GM12878 (cell line): ENCODE measurements at regions of chr5 and their contacts with region 1.

Region 1: DNA sequence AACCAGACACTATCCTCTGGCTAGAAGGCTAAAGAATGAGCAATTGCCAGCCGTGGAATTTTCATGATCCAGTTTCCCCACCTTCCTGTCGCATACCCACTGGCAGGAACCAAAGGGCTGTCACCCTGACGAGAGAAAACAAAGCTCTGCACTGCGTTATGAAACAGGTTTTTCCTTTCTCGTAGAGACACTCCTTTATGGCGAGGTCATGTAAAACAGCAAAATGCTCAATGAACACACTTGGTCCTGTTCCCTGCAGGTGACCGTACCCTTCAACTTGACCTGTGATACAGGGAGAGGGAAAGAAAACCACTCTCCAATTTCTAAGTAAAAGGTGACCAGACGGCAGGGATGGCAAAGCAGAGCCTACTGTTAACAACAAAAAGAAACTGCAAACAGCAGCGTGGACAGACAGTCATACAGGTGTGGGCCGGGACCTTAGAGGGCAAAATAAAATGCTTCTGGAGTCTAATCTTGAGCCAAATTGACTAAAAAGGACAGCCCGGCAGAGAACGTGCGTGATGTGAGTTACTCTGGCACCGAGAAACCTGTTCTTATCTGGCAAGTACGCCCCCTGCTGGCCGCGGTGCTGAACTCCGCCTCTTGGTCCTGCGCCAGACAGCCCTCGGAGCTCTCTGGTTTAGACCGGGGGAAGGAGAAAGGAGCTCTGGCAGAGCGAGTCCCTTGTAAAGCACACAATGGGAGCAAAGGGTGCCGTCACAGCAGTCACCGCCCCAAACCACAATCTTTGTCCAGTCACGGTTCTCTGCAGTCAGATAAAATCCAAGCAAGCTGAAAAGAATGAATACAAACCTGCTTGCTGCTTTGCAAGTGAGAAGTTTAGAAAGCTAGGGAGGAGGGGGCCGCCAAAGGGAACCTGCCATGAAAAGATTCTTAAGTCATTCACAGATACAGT is 98.9 kb downstream of the EFNA5 start:
- DNase-seq: peak; percentile 83
- ATAC-seq: peak; percentile 88
- H3K4me3 ChIP-seq: peak overlapping the region; percentile 64
- H3K27ac ChIP-seq: peak overlapping the region; percentile 95
- H3K4me1 ChIP-seq: peaks cover 27% of the 10 kb centered on the region
- H3K27me3 ChIP-seq: no peaks in the 10 kb centered on the region
- CTCF ChIP-seq: peak; percentile 92 to 94 (median 94)
- EP300 ChIP-seq: no peak
- POLR2A ChIP-seq: peak; percentile 63
- RAD21 ChIP-seq: peak; percentile 89

Region 2: DNA sequence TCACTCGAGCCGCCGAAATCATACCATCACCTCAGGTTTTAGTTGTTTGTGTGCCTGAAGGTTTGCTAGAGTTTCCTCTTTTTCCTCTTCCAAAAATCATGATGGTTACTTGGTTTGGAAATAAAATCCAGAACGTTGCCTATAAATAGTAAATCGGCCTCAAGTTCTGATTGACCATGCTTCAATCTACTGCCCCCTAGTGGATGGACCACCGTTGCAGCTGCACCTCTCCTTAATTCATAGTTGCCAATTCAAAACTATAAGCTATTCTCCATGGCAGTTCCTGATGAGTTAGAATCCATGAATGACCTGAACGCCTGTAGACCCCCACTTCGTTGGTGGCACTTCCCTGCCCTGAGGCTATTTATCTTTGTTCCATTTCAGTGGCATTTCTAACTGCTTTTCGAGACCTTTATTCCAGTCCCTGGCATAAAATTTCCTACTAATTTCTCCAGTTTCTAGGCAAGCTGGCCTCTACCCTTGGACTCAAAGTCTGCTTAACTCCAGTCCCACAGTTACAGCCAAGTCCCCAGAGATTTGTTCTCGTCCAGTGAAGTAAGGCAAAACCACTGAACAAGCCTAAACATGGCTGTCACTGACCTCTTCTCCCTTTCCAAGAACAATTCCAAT is 323.7 kb before region 1 on chr5:
- CTCF ChIA-PET with region 1: interaction called, 23 read pairs
- POLR2A ChIA-PET with region 1: no interaction called
- RAD21 ChIA-PET with region 1: interaction called, 7 read pairs
- SMC1A ChIA-PET with region 1: interaction called, 4 read pairs
- in situ Hi-C with region 1: no loop called
- intact Hi-C with region 1: no loop called
- DNase-seq: peak; percentile 13
- ATAC-seq: peak; percentile 80
- H3K4me3 ChIP-seq: no peak overlapping the region
- H3K27ac ChIP-seq: no peak overlapping the region
- H3K4me1 ChIP-seq: no peaks in the 10 kb centered on the region
- H3K27me3 ChIP-seq: peaks cover 0 to 4% of the 10 kb centered on the region in 2 experiments; a peak in 1 of 4 replicates
- CTCF ChIP-seq: peak; percentile 67 to 92 (median 79)
- EP300 ChIP-seq: no peak
- POLR2A ChIP-seq: no peak
- RAD21 ChIP-seq: peak; percentile 62

Region 3: DNA sequence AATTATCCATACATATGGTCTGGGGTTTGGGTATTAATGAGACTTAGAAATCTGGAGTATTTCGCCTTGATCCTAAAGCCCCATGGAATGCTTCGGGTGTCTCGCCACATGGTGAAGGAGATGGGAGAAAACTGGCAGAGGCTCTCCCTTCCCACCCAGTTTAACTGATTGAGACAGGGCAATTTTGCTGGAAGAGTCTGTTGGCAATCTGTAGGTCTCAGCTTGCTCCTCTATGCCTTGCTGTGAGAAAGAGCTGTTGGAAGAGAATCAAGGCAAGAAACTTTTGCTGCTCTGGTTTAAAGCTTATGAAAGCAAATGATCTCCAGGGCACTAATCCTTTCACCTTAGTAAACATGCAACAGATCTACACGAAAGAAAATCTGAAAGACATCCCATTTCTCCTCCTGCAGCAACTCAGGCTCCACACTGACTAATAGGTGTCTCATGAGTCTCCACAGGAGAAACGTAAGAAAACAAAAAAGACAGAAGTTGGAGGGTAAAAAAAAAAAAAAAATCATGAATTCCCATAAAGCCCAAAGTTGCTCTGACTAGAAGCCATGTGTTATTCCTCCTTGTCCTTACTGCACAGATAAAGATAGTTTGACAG is 271.1 kb before region 1 on chr5:
- CTCF ChIA-PET with region 1: interaction called, 7 read pairs
- POLR2A ChIA-PET with region 1: interaction called, 5 read pairs
- RAD21 ChIA-PET with region 1: interaction called, 10 read pairs
- SMC1A ChIA-PET with region 1: interaction called, 8 read pairs
- in situ Hi-C with region 1: no loop called
- intact Hi-C with region 1: loop called (anchors 5 kb)
- DNase-seq: no peak
- ATAC-seq: no peak
- H3K4me3 ChIP-seq: no peak overlapping the region
- H3K27ac ChIP-seq: no peak overlapping the region
- H3K4me1 ChIP-seq: no peaks in the 10 kb centered on the region
- H3K27me3 ChIP-seq: no peaks in the 10 kb centered on the region
- CTCF ChIP-seq: no peak
- EP300 ChIP-seq: no peak
- POLR2A ChIP-seq: no peak
- RAD21 ChIP-seq: no peak

Region 4: DNA sequence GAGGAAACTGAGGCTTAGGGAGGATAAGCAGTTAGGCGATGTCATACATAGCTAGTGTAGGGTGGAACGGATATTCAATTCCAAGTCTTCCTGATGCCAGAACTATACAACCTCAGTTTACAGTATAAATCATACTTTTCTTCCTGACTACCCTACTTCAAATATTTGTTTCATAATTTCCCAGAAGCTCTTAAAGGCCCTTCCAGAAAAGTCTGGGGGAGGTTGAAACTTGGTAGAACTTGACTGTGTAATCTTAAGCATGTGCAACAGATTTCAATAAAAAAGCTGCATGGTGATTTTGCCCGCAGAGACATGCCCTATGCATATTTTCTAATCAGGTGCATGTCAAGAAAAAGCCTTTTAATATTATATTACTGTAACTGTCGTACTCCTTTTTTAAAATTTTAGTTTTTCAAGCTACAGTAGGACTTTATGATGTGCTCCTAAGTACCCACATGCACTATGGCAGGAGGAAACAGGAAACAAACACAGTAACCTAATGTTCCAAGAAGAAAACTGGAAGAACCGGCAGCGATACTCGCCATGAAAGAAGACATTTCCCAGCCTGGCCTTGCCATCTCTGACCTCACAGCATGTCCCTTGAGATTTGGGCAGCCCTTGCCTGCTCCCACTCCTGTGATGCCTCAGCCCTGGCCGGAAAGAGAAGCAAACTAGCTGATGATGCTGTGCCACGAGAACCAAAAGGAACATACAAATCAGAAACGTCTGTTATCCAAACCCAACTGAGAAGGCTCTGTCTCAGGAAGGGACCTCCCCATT is 167.1 kb before region 1 on chr5:
- CTCF ChIA-PET with region 1: interaction called, 10 read pairs
- POLR2A ChIA-PET with region 1: no interaction called
- RAD21 ChIA-PET with region 1: interaction called, 3 read pairs
- SMC1A ChIA-PET with region 1: no interaction called
- in situ Hi-C with region 1: no loop called
- intact Hi-C with region 1: no loop called
- DNase-seq: no peak
- ATAC-seq: no peak
- H3K4me3 ChIP-seq: no peak overlapping the region
- H3K27ac ChIP-seq: no peak overlapping the region
- H3K4me1 ChIP-seq: no peaks in the 10 kb centered on the region
- H3K27me3 ChIP-seq: no peaks in the 10 kb centered on the region; a peak in 1 of 4 replicates
- CTCF ChIP-seq: no peak
- EP300 ChIP-seq: no peak
- POLR2A ChIP-seq: no peak
- RAD21 ChIP-seq: no peak

Region 5: GRCh38 chr5:107464416-107464815 is 107.5 kb before region 1 on chr5:
- CTCF ChIA-PET with region 1: interaction called, 8 read pairs
- POLR2A ChIA-PET with region 1: interaction called, 5 read pairs
- RAD21 ChIA-PET with region 1: interaction called, 10 read pairs
- SMC1A ChIA-PET with region 1: interaction called, 14 read pairs
- in situ Hi-C with region 1: no loop called
- intact Hi-C with region 1: no loop called
- DNase-seq: no peak
- ATAC-seq: peak; percentile 66
- H3K4me3 ChIP-seq: no peak overlapping the region
- H3K27ac ChIP-seq: no peak overlapping the region
- H3K4me1 ChIP-seq: peaks cover 3% of the 10 kb centered on the region; the same call in 1 of the 2 replicates
- H3K27me3 ChIP-seq: no peaks in the 10 kb centered on the region
- CTCF ChIP-seq: no peak
- EP300 ChIP-seq: no peak
- POLR2A ChIP-seq: no peak
- RAD21 ChIP-seq: no peak

Region 6: DNA sequence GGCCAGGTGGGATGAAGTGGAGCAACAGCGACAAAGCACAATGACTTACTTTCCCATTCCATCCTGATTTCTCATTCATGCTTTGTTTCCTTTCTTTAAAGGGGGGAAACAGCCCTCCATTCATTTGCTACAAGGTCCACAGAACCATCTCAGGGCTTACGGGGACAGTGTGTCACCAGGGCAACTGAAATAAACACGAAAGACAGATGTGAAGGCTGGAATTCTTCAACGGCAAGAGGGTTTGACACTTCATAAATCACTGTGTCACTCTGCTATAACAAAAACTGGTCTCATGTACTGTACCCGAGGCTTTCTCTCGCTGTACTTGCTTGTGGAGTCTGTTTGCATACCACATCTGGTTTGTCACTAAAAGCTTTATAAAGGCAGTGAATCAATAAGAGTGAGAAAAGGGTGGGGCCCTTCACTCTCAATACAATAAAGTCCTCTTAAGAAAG is 52.0 kb before region 1 on chr5:
- CTCF ChIA-PET with region 1: interaction called, 4 read pairs
- POLR2A ChIA-PET with region 1: no interaction called
- RAD21 ChIA-PET with region 1: interaction called, 11 read pairs
- SMC1A ChIA-PET with region 1: interaction called, 14 read pairs
- in situ Hi-C with region 1: no loop called
- intact Hi-C with region 1: no loop called
- DNase-seq: peak; percentile 33
- ATAC-seq: peak; percentile 77
- H3K4me3 ChIP-seq: no peak overlapping the region
- H3K27ac ChIP-seq: no peak overlapping the region
- H3K4me1 ChIP-seq: peaks cover 4% of the 10 kb centered on the region
- H3K27me3 ChIP-seq: no peaks in the 10 kb centered on the region
- CTCF ChIP-seq: no peak
- EP300 ChIP-seq: peak; percentile 10 to 42; a peak in 1 of 4 replicates
- POLR2A ChIP-seq: no peak
- RAD21 ChIP-seq: no peak

Region 7: GRCh38 chr5:107666051-107666655 is 94.3 kb after region 1 on chr5:
- CTCF ChIA-PET with region 1: interaction called, 13 read pairs
- POLR2A ChIA-PET with region 1: interaction called, 4 read pairs
- RAD21 ChIA-PET with region 1: interaction called, 22 read pairs
- SMC1A ChIA-PET with region 1: interaction called, 18 read pairs
- in situ Hi-C with region 1: no loop called
- intact Hi-C with region 1: no loop called
- DNase-seq: no peak
- ATAC-seq: no peak
- H3K4me3 ChIP-seq: peak overlapping the region; percentile 34; the same call in 1 of the 2 replicates
- H3K27ac ChIP-seq: no peak overlapping the region
- H3K4me1 ChIP-seq: peaks cover 1% of the 10 kb centered on the region
- H3K27me3 ChIP-seq: peaks cover 0 to 2% of the 10 kb centered on the region in 2 experiments; a peak in 3 of 4 replicates
- CTCF ChIP-seq: no peak
- EP300 ChIP-seq: no peak
- POLR2A ChIP-seq: no peak
- RAD21 ChIP-seq: no peak